Right lobe of liver (tissue), 6 donors: ENCODE measurements at regions of chr19 and their contacts with region 1.

Region 1: DNA sequence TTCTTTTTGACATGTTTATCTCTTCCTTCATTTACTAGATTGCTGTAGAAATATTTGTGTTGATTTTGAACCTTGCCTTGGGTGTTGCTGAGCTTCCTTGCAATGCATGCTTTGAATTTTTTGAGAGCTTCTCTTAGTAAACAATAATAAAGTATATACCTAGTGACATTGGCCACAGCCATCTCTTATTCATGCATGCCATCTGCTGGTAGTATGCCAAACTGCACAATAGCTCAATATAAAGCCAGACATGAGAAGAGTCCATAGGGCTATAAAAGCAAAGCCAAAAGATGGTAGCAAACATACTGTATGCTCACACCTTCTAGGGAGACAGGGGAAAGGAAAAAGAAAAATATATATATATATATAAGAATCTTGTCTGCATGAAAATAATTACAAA is 18.9 kb upstream of the ZSCAN5A start:
- DNase-seq: no peak
- ATAC-seq: peak; percentile 80 to 92 (median 85)
- H3K4me3 ChIP-seq: no peak overlapping the region
- H3K27ac ChIP-seq: no peak overlapping the region
- H3K4me1 ChIP-seq: no peaks in the 10 kb centered on the region
- H3K27me3 ChIP-seq: no peaks in the 10 kb centered on the region
- CTCF ChIP-seq: peak; percentile 64 to 83 (median 75)
- POLR2A ChIP-seq: no peak

Region 2: DNA sequence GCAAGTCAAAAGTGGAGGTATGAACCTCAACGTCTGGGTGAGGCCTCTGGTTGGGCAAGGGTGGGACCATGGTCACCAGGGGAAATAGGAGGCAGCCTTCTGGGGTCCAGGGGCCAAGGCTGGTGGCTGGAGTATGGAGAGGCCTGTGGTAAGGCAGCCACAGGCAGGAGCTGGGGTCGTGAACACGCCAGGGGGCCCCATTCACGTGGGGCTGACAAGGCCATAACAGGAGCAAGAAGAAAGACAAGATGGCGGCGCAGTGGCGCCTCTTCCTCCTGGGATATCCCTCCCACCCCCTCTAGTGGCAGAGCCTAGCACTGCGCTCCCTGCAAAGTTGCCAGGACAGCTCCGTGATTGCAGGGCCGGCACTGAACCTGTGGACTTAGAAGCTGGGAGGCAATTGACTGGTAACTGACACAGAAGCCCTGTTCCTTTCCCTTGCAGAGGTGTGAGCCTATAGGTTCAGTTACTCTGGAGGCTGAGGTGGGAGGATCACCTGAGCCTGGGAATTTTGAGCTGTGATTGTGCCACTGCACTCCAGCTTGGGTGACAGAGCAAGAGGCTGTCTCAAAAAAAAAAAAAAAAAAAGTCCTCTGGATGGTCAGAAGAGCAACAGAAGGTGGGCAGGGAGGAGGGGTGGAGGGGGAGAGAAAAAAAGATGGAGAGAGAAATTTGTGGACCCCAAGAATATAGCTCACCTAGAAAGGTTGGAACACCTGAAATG is 80.6 kb before region 1 on chr19:
- intact Hi-C with region 1: loop called in 1 of 2 experiments (anchors 10 kb)
- DNase-seq: peak; percentile 78 to 81 (median 81)
- ATAC-seq: peak; percentile 85 to 98 (median 95)
- H3K4me3 ChIP-seq: no peak overlapping the region
- H3K27ac ChIP-seq: no peak overlapping the region
- H3K4me1 ChIP-seq: no peaks in the 10 kb centered on the region
- H3K27me3 ChIP-seq: no peaks in the 10 kb centered on the region
- CTCF ChIP-seq: peak; percentile 78 to 90 (median 82)
- POLR2A ChIP-seq: no peak